ENCODE measurements at regions of chr1 and their contacts with region 1.

Region 1: GRCh38 chr1:52683367-52683940 is 14.7 kb downstream of the COA7 start:
- DNase-seq: no peak

Region 2: DNA sequence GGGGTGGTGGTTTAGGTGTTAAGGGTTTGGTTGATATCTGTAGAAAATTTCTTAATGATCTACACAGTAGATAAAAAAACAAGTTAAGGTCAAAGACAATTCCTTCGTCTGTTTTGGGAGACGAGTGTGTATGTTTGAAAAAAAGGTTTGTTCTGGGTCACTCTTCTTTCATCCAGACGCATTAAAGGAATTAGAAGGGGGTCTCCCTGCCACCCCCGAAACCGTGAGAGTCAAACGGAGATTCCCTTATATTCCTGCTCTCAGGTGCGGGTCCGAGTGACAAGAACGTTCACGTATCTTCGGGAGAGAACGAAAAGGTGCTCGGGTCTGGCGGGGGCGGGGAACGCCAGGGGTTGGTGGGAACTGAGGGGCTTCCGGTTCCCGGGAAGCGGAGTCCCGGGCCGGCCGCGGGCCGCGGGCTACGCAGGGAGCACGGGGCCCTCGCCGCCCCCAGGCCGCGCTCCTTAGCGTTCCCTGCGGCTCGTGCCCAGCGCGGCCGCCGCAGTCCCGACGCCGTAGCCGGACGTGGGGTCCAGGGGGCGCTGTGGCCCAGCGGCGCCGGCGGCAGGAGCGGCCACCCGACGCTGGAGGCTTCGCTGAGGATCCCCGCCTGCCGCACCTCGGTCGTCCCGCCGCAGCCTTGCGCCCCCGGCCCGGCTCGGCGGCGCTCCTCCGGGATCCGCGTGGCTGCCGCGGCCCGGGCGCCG is 541.8 kb before region 1 on chr1 and contains the start of gene ZFYVE9:
- intact Hi-C with region 1: loop called (anchors 10 kb)
- DNase-seq: peak; percentile 10 to 89 (median 74)

Region 3: DNA sequence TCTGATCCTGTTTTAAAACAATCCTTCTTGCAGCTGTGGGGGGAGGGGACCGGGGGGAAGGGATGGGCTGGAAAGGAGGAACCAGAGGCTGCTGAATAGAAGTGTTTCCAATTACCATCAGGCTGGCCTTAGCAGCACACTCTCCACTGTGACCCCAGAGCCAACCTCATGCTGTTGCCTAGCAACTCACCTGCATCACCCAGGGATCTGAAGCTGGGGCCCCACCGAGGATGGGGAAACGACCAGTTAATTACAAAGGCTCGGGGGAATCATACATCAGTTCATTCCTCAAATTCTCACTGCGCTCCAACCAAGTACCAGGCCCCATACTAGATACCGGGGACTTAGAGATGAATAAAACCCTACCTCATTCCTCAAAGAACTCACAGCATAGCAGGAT is 93.2 kb before region 1 on chr1:
- intact Hi-C with region 1: no loop called
- DNase-seq: no peak

Region 4: DNA sequence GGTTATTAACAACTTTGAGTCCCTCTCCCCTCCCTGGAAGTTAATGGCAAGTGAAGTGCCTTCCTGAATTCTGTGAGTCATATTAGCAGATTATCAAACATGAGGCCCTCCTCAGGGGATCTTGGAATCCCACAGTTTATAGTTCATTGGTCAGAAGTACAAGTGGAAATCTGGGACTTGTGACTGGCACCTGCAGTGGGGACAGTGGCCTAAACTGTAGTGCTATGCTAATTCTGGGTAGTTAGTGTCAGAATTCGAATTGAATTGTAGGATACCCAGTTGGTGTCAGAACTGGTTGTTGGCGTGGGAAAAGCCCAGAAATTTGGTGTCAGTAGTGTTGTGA is 69.0 kb after region 1 on chr1:
- intact Hi-C with region 1: no loop called
- DNase-seq: no peak